Dorsolateral prefrontal cortex (tissue), 120 donors: ENCODE measurements at regions of chr21 and their contacts with region 1.

Region 1: GRCh38 chr21:43659136-43660000 is at the starts of genes HSF2BP and RRP1B:
- DNase-seq: peak; percentile 53 to 91 (median 74)
- H3K4me3 ChIP-seq: peak within 1 kb of the TSS; percentile 64 to 100 (median 97)
- H3K27ac ChIP-seq: peak within 1 kb of the TSS in 58 of 59 donors; percentile 25 to 93 (median 85)
- H3K27me3 ChIP-seq: no peaks in the 10 kb centered on the region
- CTCF ChIP-seq: peak in 38 of 56 donors; percentile 10 to 62 (median 26)
- total RNA-seq, gene HSF2BP: 0.70 to 4.4 (median 1.9) TPM
- total RNA-seq, gene RRP1B: 11.7 to 22.2 (median 15.9) TPM

Region 2: DNA sequence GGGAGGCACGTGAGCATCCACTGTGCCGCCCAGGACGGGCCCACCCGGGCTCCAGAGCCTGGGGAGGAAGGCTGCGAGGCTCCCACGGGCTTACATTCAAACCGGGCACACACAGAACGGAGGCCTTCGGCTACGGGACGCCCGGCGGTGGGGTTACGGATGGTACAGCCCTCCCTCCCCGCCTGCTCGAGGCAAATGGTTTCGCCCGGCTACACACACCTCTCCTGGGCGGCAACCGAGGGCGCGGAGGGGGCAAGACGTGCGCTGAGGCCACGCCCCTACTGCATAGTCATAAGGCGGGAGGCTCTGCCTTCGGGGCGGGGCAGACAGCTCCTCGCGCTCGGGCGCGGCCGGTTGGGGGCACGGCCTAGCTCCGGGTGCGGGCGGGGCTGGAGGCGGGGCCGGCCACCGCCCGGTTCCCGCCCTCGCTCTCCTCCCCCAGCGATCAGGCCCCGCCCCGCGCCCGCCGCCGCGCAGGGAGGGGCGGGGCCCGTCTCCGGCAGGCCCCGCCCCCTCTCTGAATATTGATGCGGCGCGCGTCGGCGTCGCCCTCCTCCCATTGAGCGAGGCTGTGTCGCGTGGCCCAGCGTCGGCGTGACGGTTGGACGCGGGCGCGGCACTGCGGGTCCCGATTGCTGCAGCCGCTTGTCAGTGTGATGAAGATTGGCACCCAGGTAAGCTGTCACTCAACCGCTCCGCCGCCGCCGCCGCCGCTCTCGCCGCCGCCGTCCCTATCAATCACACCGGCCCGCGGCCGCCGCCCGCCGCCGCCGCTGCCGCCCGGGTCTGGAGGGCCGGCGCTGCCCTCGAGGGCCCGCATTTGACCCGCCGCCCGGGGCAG is 685.2 kb before region 1 on chr21 and contains the start of gene PKNOX1:
- intact Hi-C with region 1: loop called in 1 of 2 experiments (anchors 10 kb)
- DNase-seq: peak; percentile 91 to 99 (median 98)
- H3K4me3 ChIP-seq: peak within 1 kb of the TSS; percentile 68 to 95 (median 81)
- H3K27ac ChIP-seq: peak within 1 kb of the TSS; percentile 83 to 100 (median 96)
- H3K27me3 ChIP-seq: no peaks in the 10 kb centered on the region
- CTCF ChIP-seq: peak in 7 of 56 donors; percentile 2 to 37 (median 11)
- total RNA-seq, gene PKNOX1: 12.3 to 50.7 (median 23.5) TPM

Region 3: DNA sequence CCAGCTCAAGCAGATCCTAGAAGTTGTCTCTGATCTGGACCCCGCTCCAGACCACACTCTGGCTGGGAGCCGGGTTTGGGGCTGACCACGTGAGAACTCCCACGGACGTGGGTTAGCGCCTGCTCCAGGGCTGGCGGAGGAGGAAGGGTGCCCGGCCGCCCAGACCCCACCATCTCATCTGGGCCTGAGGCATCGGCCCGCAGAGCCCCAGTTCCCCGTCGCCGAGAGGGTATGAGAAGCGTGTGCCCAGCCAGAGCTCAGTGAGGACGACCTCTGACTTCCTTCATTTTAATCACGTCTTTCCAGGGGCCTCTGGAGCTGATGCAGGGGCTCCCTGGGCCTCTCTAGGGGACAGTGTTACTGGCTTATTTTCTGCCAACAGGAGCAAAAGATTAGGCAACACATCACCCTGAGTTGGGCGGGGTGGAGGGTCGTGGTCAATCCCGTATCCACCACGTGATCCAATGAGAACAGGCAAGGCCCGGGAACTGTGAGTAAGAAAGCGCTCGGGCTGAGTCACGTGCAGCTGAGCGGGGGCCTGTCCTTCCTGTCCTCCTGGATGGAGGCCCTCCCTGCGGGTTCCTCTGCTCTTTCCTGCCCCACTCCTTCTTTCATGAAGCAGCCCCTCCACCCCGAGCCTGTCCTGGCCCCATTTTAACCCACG is 313.5 kb before region 1 on chr21:
- intact Hi-C with region 1: loop called in 1 of 2 experiments (anchors 10 kb)
- DNase-seq: no peak
- H3K4me3 ChIP-seq: no peak overlapping the region
- H3K27ac ChIP-seq: no peak overlapping the region
- H3K27me3 ChIP-seq: no peaks in the 10 kb centered on the region
- CTCF ChIP-seq: no peak

Region 4: GRCh38 chr21:43718872-43719747 is 59.7 kb after region 1 on chr21 and contains the start of gene PDXK:
- intact Hi-C with region 1: loop called in 1 of 2 experiments (anchors 5 kb)
- DNase-seq: peak; percentile 67 to 91 (median 84)
- H3K4me3 ChIP-seq: peak within 1 kb of the TSS; percentile 56 to 99 (median 94)
- H3K27ac ChIP-seq: peak within 1 kb of the TSS; percentile 17 to 98 (median 92)
- H3K27me3 ChIP-seq: no peaks in the 10 kb centered on the region
- CTCF ChIP-seq: peak in 26 of 56 donors; percentile 9 to 54 (median 26)
- total RNA-seq, gene PDXK: 169 to 469 (median 338) TPM

Region 5: DNA sequence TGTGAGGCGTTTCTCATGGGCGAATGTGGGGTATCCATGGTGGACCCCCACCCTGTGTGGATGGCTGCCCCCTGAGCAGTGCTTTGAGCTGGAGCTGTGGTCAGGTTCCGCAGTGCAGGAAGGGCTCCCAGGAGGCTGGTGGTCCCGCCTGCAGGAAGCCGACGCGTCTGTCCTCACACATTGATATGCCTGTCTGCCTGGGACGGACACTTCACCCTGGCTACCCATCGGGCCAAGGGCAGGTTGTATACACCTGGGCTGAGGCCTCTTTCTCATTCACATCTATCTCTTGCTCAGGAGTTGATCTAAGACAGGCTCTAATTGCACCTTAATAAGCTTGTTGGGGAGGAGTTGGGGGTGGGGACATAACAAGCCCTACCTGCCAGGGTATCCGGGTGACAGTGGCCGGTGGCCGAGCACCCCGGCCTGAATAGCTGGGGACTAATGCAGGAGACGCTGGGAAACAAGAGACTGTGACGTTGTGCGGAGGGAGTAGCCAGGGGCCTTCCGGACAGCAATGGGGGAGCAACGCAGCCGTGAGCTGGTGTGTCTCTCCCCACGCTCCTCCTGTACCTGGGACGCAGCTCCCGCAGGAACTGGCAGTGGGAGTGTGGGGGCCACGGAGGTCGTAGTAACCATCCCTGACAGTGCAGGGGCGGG is 81.3 kb after region 1 on chr21:
- intact Hi-C with region 1: no loop called
- DNase-seq: peak in 4 of 10 donors; percentile 53 to 71 (median 68)
- H3K4me3 ChIP-seq: peak overlapping the region in 11 of 59 donors; percentile 10 to 56 (median 18)
- H3K27ac ChIP-seq: peak overlapping the region in 53 of 59 donors; percentile 3 to 93 (median 63)
- H3K27me3 ChIP-seq: no peaks in the 10 kb centered on the region
- CTCF ChIP-seq: no peak

Region 6: DNA sequence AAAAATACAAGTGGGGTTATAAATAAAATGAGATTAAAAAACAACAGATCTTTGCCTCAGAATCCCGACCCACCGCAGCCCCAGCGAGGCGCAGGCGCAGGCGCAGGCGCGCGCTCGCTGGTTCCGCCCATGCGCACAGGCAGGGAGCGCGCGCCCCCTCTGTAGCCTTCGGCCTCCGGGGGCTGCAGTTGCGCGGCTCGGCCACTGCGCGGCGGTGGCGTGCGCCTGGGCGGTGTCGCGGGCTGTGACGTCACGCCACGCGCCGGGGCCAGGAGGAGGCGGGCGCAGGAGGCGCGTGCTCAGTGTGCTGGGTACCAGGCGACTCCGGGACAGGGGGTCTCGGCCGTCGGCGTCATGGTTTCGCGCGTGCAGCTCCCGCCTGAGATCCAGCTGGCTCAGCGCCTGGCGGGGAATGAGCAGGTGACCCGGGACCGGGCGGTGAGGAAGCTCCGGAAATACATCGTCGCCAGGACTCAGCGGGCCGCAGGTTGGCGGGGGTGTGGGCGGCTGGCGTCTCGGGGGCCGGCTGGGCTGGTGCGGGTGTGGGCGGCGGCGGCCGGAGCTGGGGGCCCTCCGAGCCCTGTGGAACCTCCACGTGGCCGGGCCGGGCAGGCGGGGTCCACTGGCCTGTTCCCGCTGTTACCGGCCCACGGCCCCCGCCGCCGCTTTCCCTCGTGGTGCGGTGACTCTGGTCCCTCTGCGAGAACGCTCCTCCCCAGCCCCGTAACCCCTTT is 130.1 kb after region 1 on chr21 and contains the start of gene RRP1:
- intact Hi-C with region 1: loop called (anchors 1 to 5 kb)
- DNase-seq: peak; percentile 77 to 94 (median 88)
- H3K4me3 ChIP-seq: peak within 1 kb of the TSS; percentile 63 to 98 (median 89)
- H3K27ac ChIP-seq: peak within 1 kb of the TSS; percentile 63 to 99 (median 94)
- H3K27me3 ChIP-seq: no peaks in the 10 kb centered on the region
- CTCF ChIP-seq: peak; percentile 84 to 100 (median 98)
- total RNA-seq, gene RRP1: 22.5 to 48.3 (median 31.5) TPM